K562 (cell line): ENCODE measurements at regions of chr15 and their contacts with region 1.

Region 1: GRCh38 chr15:51688863-51689262 is 7.6 kb downstream of the SCG3 start:
- DNase-seq: peak in 3 of 4 experiments; percentile 29 to 46 (median 38)
- ATAC-seq: peak; percentile 82
- H3K4me3 ChIP-seq: no peak overlapping the region
- H3K27ac ChIP-seq: no peak overlapping the region
- H3K4me1 ChIP-seq: peaks cover 3 to 13% of the 10 kb centered on the region in 2 experiments; a peak in 4 of 5 replicates
- H3K27me3 ChIP-seq: no peaks in the 10 kb centered on the region
- CTCF ChIP-seq: peak; percentile 24 to 49 (median 34); a peak in 2 of 6 replicates
- EP300 ChIP-seq: no peak
- POLR2A ChIP-seq: no peak
- RAD21 ChIP-seq: peak; percentile 16 to 49; a peak in 2 of 4 replicates

Region 2: DNA sequence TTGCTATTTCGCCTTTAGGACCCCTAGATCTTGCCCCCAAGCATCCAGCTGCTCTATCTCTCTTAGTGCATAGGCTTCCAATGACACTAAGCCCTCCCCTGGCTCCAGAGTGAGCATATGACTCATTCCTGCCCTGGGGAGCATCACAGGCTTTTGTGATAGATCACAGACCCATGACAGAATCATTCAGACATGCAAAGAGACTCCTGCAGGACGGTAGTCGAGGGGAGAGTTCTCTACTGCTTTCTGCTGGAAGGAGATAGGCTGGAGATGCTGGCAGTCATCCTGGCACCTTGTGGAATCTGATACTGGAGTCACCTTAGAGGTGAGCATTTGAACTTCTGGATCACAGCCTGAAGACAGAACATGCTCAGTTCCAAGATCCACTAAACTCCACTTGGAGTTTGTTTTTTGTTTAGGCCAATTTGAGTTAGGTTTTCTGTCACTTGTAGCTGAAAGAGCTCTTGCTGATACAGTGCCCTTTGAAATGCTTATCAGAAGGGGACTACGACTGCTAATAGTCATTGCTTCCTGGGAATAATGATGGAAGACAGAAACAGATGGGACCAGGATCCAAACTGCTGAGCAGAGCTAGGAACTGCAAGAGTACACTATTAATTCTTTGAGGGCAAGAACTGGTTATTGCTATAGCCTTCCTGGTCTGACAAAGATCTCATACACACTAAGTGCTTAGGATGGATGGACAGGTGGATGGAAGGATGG is 37.6 kb after region 1 on chr15:
- CTCF ChIA-PET with region 1: no interaction called
- POLR2A ChIA-PET with region 1: no interaction called
- in situ Hi-C with region 1: no loop called
- intact Hi-C with region 1: loop called (anchors 5 kb)
- DNase-seq: peak; percentile 74 to 84 (median 82)
- ATAC-seq: peak; percentile 93
- H3K4me3 ChIP-seq: no peak overlapping the region
- H3K27ac ChIP-seq: no peak overlapping the region
- H3K4me1 ChIP-seq: peaks cover 0 to 33% of the 10 kb centered on the region in 2 experiments; a peak in 4 of 5 replicates
- H3K27me3 ChIP-seq: no peaks in the 10 kb centered on the region
- CTCF ChIP-seq: no peak
- EP300 ChIP-seq: no peak
- POLR2A ChIP-seq: no peak
- RAD21 ChIP-seq: no peak

Region 3: GRCh38 chr15:51750792-51751685 is 62.2 kb after region 1 on chr15 and contains the start of gene TMOD2:
- CTCF ChIA-PET with region 1: no interaction called
- POLR2A ChIA-PET with region 1: no interaction called
- in situ Hi-C with region 1: no loop called
- intact Hi-C with region 1: no loop called
- DNase-seq: peak; percentile 66 to 73 (median 70)
- ATAC-seq: peak; percentile 91
- H3K4me3 ChIP-seq: peak within 1 kb of the TSS; percentile 64
- H3K27ac ChIP-seq: no peak within 1 kb of the TSS; the same call in 2 of the 3 replicates
- H3K4me1 ChIP-seq: peaks cover 13 to 17% of the 10 kb centered on the region in 2 experiments; a peak in 4 of 5 replicates
- H3K27me3 ChIP-seq: no peaks in the 10 kb centered on the region; a peak in 1 of 5 replicates
- CTCF ChIP-seq: no peak
- EP300 ChIP-seq: no peak
- POLR2A ChIP-seq: no peak
- RAD21 ChIP-seq: no peak
- polyA plus RNA-seq, gene TMOD2: 0.49 to 0.85 TPM